MCF 10A (cell line): ENCODE measurements at regions of chr1 and their contacts with region 1.

Region 1: DNA sequence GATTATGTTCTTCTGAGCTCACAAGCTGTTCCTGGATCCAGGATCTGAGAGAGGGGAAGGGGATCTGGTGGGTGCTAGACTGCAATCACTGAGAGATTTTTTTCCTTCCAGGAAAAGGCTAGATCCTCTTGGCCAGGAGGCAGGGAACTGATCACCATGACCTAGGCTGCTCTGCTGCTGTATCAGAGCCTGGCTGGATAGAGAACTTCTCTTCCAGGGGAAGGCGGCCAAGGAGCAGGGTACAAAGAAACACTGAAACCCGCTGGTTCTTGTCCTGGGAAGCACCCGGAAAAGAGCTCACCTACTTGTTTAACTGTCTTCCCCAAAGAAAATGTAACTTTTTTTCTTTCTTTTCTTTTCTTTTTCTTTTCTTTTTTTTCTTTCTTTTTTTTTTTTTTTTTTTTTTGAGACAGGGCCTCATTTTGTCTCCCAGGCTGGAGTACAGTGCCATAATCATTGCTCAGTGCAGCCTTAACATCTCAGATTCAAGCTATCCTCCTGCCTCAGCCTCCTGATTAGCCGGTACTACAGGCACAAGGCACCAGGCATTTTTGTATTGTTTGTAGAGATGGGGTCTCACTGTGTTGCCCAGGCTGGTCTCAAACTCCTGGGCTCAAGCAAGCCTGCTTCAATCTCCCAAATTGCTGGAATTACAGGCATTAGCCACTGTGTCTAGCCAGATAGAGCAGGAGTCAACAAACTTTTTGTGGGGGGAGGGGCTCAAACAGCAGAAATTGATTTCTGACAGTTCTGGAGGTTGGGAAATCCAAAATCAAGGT is 12.4 kb upstream of the RPS6KA1 start:
- DNase-seq: no peak
- H3K4me3 Mint-ChIP-seq: no peak overlapping the region
- H3K27ac Mint-ChIP-seq: no peak overlapping the region
- H3K4me1 Mint-ChIP-seq: peaks cover 8% of the 10 kb centered on the region
- H3K27me3 Mint-ChIP-seq: no peaks in the 10 kb centered on the region
- CTCF ChIP-seq: no peak

Region 2: GRCh38 chr1:26434161-26434752 is 82.9 kb before region 1 on chr1:
- CTCF ChIA-PET with region 1: no interaction called
- POLR2A ChIA-PET with region 1: no interaction called
- intact Hi-C with region 1: no loop called
- DNase-seq: no peak
- H3K4me3 Mint-ChIP-seq: peak overlapping the region; percentile 27
- H3K27ac Mint-ChIP-seq: no peak overlapping the region
- H3K4me1 Mint-ChIP-seq: peaks cover 12% of the 10 kb centered on the region
- H3K27me3 Mint-ChIP-seq: no peaks in the 10 kb centered on the region
- CTCF ChIP-seq: no peak

Region 3: GRCh38 chr1:26529655-26530409 is 12.7 kb after region 1 on chr1 and contains the start of gene RPS6KA1:
- CTCF ChIA-PET with region 1: interaction called, 10 read pairs
- POLR2A ChIA-PET with region 1: interaction called, 10 read pairs
- intact Hi-C with region 1: no loop called
- DNase-seq: peak; percentile 56
- H3K4me3 Mint-ChIP-seq: peak within 1 kb of the TSS; percentile 89
- H3K27ac Mint-ChIP-seq: peak within 1 kb of the TSS; percentile 90
- H3K4me1 Mint-ChIP-seq: peaks cover 14% of the 10 kb centered on the region
- H3K27me3 Mint-ChIP-seq: no peaks in the 10 kb centered on the region
- CTCF ChIP-seq: no peak
- total RNA-seq, gene RPS6KA1: 43.9 and 50.9 TPM in 2 replicates

Region 4: DNA sequence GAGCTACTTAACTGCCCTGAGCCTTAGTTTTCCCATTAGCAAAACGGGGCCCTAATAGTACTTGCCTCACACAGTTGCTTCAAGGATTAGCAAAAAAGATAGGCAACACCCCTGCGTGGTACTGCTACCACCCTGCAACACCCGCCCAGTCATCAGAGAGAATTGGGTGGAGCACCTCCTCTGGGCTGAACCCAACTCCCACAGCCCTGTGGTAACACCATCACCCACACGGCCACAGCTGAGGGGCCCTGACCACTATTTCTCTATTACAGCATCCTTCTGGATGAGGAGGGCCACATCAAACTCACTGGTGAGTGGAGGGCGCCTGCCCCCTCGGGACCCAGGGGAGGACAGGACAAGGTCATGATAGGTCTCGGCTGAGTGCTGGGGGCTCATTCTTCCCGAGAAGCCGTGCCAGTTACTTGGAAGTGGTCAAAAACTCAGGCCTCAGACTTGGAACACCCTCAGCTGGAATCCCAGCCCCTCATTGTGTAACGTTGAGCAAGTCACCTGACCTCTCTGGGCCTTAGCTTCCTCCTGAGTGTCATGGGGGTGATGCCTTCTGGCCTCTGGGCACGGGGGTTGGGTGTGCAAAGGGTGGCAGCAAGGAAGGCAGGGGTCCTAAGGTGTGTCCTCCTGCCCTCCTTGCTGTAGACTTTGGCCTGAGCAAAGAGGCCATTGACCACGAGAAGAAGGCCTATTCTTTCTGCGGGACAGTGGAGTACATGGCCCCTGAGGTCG is 36.9 kb after region 1 on chr1:
- CTCF ChIA-PET with region 1: no interaction called
- POLR2A ChIA-PET with region 1: no interaction called
- intact Hi-C with region 1: no loop called
- DNase-seq: no peak
- H3K4me3 Mint-ChIP-seq: no peak overlapping the region
- H3K27ac Mint-ChIP-seq: no peak overlapping the region
- H3K4me1 Mint-ChIP-seq: no peaks in the 10 kb centered on the region
- H3K27me3 Mint-ChIP-seq: no peaks in the 10 kb centered on the region
- CTCF ChIP-seq: no peak

Region 5: GRCh38 chr1:26618561-26618960 is 101.4 kb after region 1 on chr1:
- CTCF ChIA-PET with region 1: no interaction called
- POLR2A ChIA-PET with region 1: no interaction called
- intact Hi-C with region 1: no loop called
- DNase-seq: no peak
- H3K4me3 Mint-ChIP-seq: no peak overlapping the region
- H3K27ac Mint-ChIP-seq: peak overlapping the region; percentile 98
- H3K4me1 Mint-ChIP-seq: peaks cover 7% of the 10 kb centered on the region
- H3K27me3 Mint-ChIP-seq: no peaks in the 10 kb centered on the region
- CTCF ChIP-seq: no peak